Activated CD4-positive, alpha-beta T cell treated with anti-CD3 and anti-CD28 coated beads for 36 hours (primary cell): ENCODE measurements at regions of chr17 and their contacts with region 1.

Region 1: DNA sequence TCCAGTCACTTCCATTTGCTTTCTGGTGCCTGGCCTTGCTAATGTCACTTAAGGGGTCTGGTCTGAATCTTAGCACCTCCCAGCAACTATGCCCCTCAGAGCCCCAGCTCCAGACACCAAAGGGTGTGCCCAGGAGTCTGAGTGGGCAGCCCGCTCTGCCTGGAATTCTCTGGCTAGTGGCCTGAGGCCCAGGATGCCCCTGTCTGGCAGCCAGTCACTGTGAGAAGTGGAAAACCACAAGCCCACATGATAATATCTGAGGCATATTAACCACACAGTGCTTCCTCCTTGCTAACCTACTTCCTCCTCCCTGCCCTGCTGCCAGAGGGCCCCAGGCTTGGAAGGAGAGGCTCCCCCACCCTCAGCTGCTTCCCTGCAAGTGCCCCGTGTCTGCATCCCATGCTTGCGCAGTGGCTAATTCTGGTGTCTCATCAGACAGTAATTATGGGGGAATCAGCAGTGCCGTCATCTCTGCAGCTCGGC is 14.0 kb downstream of the SRCIN1 start:
- DNase-seq: no peak
- ATAC-seq: peak; percentile 43
- H3K4me3 Mint-ChIP-seq: no peak overlapping the region
- H3K27ac Mint-ChIP-seq: no peak overlapping the region
- H3K4me1 Mint-ChIP-seq: peaks cover 20% of the 10 kb centered on the region
- H3K27me3 Mint-ChIP-seq: peaks cover 64% of the 10 kb centered on the region

Region 2: GRCh38 chr17:38434178-38434665 is 157.6 kb before region 1 on chr17:
- CTCF ChIA-PET with region 1: no interaction called
- POLR2A ChIA-PET with region 1: no interaction called
- intact Hi-C with region 1: no loop called
- DNase-seq: no peak
- ATAC-seq: no peak
- H3K4me3 Mint-ChIP-seq: no peak overlapping the region
- H3K27ac Mint-ChIP-seq: no peak overlapping the region
- H3K4me1 Mint-ChIP-seq: peaks cover 4% of the 10 kb centered on the region
- H3K27me3 Mint-ChIP-seq: peaks cover 4% of the 10 kb centered on the region

Region 3: DNA sequence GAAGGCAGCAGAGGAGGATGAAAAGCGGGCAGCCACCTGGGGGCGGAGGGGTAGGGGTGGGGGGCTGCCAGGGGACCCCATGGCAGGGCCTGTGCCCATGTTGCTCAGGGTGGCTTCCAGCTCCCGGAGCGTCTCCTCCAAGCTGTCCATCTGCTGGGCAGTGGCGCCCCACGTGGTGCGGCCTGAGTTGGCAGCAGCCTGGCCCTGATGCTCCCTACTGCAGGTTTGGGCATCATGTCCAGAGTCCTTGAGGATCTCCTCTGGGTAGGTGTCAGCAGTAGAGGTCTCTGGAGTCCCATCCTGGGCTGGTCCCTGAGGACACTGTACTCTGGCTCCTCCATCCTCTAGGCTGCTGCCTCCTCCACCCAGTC is 47.0 kb before region 1 on chr17:
- CTCF ChIA-PET with region 1: no interaction called
- POLR2A ChIA-PET with region 1: no interaction called
- intact Hi-C with region 1: loop called in 1 of 2 experiments (anchors 5 kb)
- DNase-seq: no peak
- ATAC-seq: no peak
- H3K4me3 Mint-ChIP-seq: no peak overlapping the region
- H3K27ac Mint-ChIP-seq: no peak overlapping the region
- H3K4me1 Mint-ChIP-seq: no peaks in the 10 kb centered on the region
- H3K27me3 Mint-ChIP-seq: peaks cover 14% of the 10 kb centered on the region